ENCODE measurements at regions of chr17 and their contacts with region 1.

Region 1: GRCh38 chr17:52030052-52030451 is 128.5 kb downstream of the CA10 start:
- DNase-seq: no peak
- H3K4me3 Mint-ChIP-seq: no peak overlapping the region
- H3K27ac Mint-ChIP-seq: no peak overlapping the region
- H3K4me1 Mint-ChIP-seq: peaks cover 24% of the 10 kb centered on the region
- H3K27me3 Mint-ChIP-seq: no peaks in the 10 kb centered on the region
- CTCF ChIP-seq: no peak

Region 2: GRCh38 chr17:52213451-52213850 is 183.4 kb after region 1 on chr17:
- CTCF ChIA-PET with region 1: interaction called, 15 read pairs
- intact Hi-C with region 1: no loop called
- DNase-seq: no peak
- H3K4me3 Mint-ChIP-seq: no peak overlapping the region
- H3K27ac Mint-ChIP-seq: no peak overlapping the region
- H3K4me1 Mint-ChIP-seq: peaks cover 13% of the 10 kb centered on the region
- H3K27me3 Mint-ChIP-seq: no peaks in the 10 kb centered on the region
- CTCF ChIP-seq: no peak